ENCODE measurements at regions of chr1 and their contacts with region 1.

Region 1: GRCh38 chr1:225554216-225554812 is 98.6 kb downstream of the ENAH start:
- DNase-seq: no peak
- H3K4me3 ChIP-seq: no peak overlapping the region
- H3K27ac ChIP-seq: no peak overlapping the region
- H3K4me1 ChIP-seq: peaks cover 0 to 10% (median 0%) of the 10 kb centered on the region in 6 donors
- H3K27me3 ChIP-seq: no peaks in the 10 kb centered on the region
- CTCF ChIP-seq: peak in 10 of 11 experiments; percentile 27 to 72 (median 59)
- POLR2A ChIP-seq: no peak

Region 2: DNA sequence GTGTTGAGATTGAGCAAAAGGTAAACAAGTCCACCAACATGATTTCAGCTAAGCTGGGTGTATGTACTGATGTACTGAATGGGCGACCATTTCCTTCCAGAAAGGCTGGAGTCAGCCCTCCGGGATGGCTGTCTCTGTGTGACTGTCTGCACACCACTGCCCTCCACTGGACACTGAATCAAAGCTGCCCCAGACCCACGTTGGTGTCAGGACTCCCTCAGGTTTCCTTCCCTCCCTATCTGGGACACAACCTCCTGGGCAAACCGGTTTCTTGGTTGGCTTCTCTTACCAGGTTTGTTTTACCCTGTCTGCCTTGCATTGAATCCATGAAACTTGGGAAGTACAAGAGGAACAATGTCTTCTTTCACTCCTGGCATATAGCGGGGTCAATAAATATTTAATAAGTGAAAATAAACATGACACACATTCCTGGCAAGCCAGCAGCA is 218.0 kb after region 1 on chr1:
- intact Hi-C with region 1: loop called (anchors 5 kb)
- DNase-seq: peak; percentile 82
- H3K4me3 ChIP-seq: no peak overlapping the region
- H3K27ac ChIP-seq: peak overlapping the region in 6 of 8 donors; percentile 28 to 65 (median 60)
- H3K4me1 ChIP-seq: peaks cover under 1 to 87% (median 46%) of the 10 kb centered on the region in 6 donors
- H3K27me3 ChIP-seq: no peaks in the 10 kb centered on the region
- CTCF ChIP-seq: peak; percentile 34 to 88 (median 74)
- POLR2A ChIP-seq: no peak

Measured in spleen (tissue), 13 donors.